Activated CD4-positive, alpha-beta T cell treated with anti-CD3 and anti-CD28 coated beads, Interleukin-2, amount 10 ng/mL, durations not matched to agents 7 days and 5 days (primary cell): ENCODE measurements at regions of chr10 and their contacts with region 1.

Region 1: DNA sequence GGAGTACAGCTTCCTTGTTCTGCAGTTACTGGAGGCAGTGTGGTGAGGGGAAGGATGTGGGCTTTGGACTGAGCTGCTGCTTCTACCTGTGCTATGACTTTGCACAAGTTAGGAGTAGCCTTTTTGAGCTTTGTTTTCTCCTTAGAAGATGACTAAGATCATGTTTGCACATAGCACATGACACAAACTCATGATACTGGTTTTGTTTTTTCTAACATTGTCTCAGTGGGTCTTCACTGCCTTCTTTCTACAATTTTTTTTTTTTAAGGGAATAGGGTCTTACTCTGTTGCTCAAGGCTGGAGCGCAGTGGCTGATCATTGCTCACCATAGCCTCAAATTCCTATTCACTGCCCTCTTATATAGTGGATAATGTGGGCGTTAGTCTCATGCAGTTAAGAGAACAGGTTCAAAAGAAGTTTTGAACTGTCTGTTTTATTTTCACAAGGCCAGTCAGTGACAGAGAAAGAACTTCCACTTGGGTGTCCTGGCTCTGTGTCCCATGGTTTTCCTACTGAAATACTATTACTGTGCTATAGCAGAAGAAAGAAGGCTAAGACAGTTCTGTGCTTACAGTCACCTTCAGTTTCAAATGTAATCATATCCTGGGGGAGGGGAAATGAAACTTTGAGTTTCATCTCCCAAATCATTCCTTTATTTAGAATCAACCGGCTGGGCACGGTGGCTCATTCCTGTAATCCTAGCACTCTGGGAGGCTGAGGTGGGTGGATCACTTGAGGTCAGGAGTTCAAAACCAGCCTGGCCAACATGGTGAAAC is 72.0 kb downstream of the KAT6B start:
- DNase-seq: peak; percentile 40
- H3K4me3 Mint-ChIP-seq: no peak overlapping the region
- H3K27ac Mint-ChIP-seq: peak overlapping the region; percentile 79
- H3K4me1 Mint-ChIP-seq: peaks cover 48% of the 10 kb centered on the region
- H3K27me3 Mint-ChIP-seq: no peaks in the 10 kb centered on the region

Region 2: GRCh38 chr10:74871595-74872382 is 26.6 kb before region 1 on chr10:
- CTCF ChIA-PET with region 1: interaction called, 4 read pairs
- POLR2A ChIA-PET with region 1: interaction called, 11 read pairs
- DNase-seq: peak; percentile 24
- H3K4me3 Mint-ChIP-seq: peak overlapping the region; percentile 55
- H3K27ac Mint-ChIP-seq: peak overlapping the region; percentile 77
- H3K4me1 Mint-ChIP-seq: peaks cover 24% of the 10 kb centered on the region
- H3K27me3 Mint-ChIP-seq: no peaks in the 10 kb centered on the region

Region 3: DNA sequence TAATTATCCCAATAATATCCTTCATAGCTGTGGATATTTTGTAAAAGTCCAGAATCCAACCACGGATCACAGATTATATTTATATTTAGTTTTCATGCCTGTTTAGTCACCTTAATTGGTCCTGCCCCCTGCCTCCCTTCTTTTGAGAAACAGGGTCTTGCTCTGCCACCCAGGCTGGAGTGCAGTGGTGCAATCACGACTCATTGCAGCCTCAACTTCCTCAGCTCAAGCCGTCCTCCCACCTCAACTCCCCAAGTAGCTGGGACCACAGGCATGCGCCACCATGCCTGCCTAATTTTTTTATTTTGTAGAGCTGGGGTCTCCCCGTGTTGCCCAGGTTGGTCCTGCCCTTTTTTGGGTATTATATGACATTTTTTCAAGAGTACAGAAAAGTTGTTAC is 57.4 kb after region 1 on chr10:
- CTCF ChIA-PET with region 1: no interaction called
- POLR2A ChIA-PET with region 1: no interaction called
- DNase-seq: no peak
- H3K4me3 Mint-ChIP-seq: no peak overlapping the region
- H3K27ac Mint-ChIP-seq: no peak overlapping the region
- H3K4me1 Mint-ChIP-seq: no peaks in the 10 kb centered on the region
- H3K27me3 Mint-ChIP-seq: no peaks in the 10 kb centered on the region

Region 4: GRCh38 chr10:74991440-74992130 is 93.2 kb after region 1 on chr10:
- CTCF ChIA-PET with region 1: no interaction called
- POLR2A ChIA-PET with region 1: no interaction called
- DNase-seq: no peak
- H3K4me3 Mint-ChIP-seq: no peak overlapping the region
- H3K27ac Mint-ChIP-seq: no peak overlapping the region
- H3K4me1 Mint-ChIP-seq: peaks cover 34% of the 10 kb centered on the region
- H3K27me3 Mint-ChIP-seq: no peaks in the 10 kb centered on the region